Left cardiac atrium (tissue), 4 donors: ENCODE measurements at regions of chr5 and their contacts with region 1.

Region 1: GRCh38 chr5:34656001-34656699 is at the start of gene RAI14:
- DNase-seq: peak; percentile 88
- ATAC-seq: peak; percentile 95 to 96
- total RNA-seq, gene RAI14: 14.2 to 26.3 TPM

Region 2: GRCh38 chr5:34416501-34417008 is 239.6 kb before region 1 on chr5:
- intact Hi-C with region 1: no loop called
- DNase-seq: no peak
- ATAC-seq: no peak

Region 3: GRCh38 chr5:34522599-34523386 is 133.4 kb before region 1 on chr5:
- intact Hi-C with region 1: loop called in 1 of 2 experiments (anchors 10 kb)
- DNase-seq: peak; percentile 75
- ATAC-seq: peak; percentile 84 to 85

Region 4: DNA sequence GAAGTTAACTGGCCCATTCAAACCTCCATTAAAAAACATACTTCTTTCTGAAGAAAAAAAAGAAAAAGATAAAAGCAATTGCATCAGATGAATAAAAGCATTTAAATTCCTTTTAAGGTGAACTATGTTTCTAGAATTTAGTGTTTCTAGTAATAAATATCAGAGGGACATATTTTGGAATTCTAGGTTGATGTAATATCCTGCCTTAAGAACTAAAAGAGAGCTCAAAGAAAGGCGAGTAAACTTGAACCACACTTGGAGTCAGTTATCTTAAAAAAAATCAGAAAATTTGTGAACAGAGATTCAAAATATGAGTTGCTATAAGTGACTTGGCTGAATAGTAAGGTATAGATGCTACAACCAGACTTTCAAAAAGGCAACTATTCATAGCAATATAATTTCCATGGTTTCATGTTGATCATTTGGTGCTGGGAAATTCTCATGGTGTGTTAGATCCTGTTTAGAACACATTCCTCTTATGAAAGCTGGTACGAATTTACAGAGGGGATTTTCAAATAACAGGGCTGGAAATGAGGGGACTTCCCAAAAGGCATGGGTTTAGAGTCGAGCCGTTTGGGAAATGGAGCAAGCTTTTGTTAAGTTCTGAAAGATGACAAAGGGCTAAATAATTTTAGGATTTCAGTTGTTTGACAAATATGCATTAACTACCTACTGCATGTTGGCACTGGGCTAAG is 37.6 kb before region 1 on chr5:
- intact Hi-C with region 1: loop called in 1 of 2 experiments (anchors 5 kb)
- DNase-seq: no peak
- ATAC-seq: no peak

Region 5: DNA sequence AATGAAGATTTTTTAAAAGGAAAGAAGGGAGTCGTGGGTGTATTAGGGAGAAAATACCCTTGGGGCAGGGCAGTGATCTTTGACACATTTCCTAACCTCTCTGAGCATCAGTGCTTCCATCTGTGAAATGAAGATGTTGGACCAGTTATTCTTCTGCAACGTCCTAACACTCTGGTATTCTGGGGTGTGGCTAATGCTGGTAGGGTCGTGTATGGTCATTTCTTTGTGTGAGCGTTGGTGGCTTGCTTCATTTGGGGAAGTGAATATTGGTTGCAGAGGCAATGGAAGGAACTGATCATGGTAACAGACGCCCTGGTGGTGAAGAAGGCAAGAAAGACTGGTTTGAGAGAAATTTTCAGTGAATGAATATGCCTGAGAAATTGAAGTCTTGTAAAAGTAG is 114.9 kb after region 1 on chr5:
- intact Hi-C with region 1: no loop called
- DNase-seq: no peak
- ATAC-seq: peak in 1 of 2 donors; percentile 23

Region 6: GRCh38 chr5:34838785-34839714 is 182.9 kb after region 1 on chr5 and contains the start of gene TTC23L:
- intact Hi-C with region 1: loop called in 1 of 2 experiments (anchors 10 kb)
- DNase-seq: peak; percentile 93
- ATAC-seq: peak; percentile 95 to 98
- total RNA-seq, gene TTC23L: not detected

Region 7: GRCh38 chr5:34898258-34898895 is 242.2 kb after region 1 on chr5:
- intact Hi-C with region 1: loop called in 1 of 2 experiments (anchors 5 kb)
- DNase-seq: peak; percentile 61
- ATAC-seq: peak; percentile 68 to 85